ENCODE measurements at regions of chr21 and their contacts with region 1.

Region 1: GRCh38 chr21:15064576-15065391 is at the start of gene NRIP1:
- DNase-seq: peak; percentile 76 to 91 (median 86)
- ATAC-seq: peak; percentile 76 to 80
- H3K4me3 Mint-ChIP-seq: peak within 1 kb of the TSS; percentile 94 to 98 (median 97)
- H3K27ac Mint-ChIP-seq: peak within 1 kb of the TSS; percentile 96 to 99 (median 98)
- H3K4me1 Mint-ChIP-seq: peaks cover 28 to 56% (median 42%) of the 10 kb centered on the region in 4 donors
- H3K27me3 Mint-ChIP-seq: no peaks in the 10 kb centered on the region
- polyA plus RNA-seq, gene NRIP1: 26.6 to 38.8 (median 34.1) TPM

Region 2: GRCh38 chr21:14382835-14383594 is 681.8 kb before region 1 on chr21 and contains the start of gene HSPA13:
- POLR2A ChIA-PET with region 1: interaction called, 14 read pairs
- DNase-seq: peak; percentile 92 to 100 (median 99)
- ATAC-seq: peak; percentile 94 to 96
- H3K4me3 Mint-ChIP-seq: peak within 1 kb of the TSS; percentile 95 to 100 (median 100)
- H3K27ac Mint-ChIP-seq: peak within 1 kb of the TSS; percentile 96 to 100 (median 100)
- H3K4me1 Mint-ChIP-seq: peaks cover 11 to 46% (median 39%) of the 10 kb centered on the region in 4 donors
- H3K27me3 Mint-ChIP-seq: no peaks in the 10 kb centered on the region
- polyA plus RNA-seq, gene HSPA13: 10.2 to 11.4 (median 11.0) TPM

Region 3: DNA sequence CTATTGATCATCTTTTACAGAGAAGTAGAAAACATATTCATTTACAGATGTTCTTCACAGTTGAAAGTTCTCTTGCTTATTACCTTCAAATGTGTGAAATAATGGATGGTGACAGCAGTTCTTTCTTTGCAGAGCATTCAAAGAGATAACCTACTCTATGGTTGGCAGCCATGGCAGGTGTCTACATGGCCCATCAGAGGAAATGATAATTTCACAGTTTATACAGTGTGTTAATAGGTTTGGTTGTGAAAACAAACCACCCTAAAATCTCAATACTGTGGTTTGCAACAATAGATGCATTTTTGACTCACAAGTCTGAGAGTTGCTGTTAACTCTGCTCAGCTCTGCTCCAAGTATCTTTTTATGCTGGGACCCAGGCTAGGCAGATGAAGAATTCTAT is 277.5 kb before region 1 on chr21:
- POLR2A ChIA-PET with region 1: no interaction called
- DNase-seq: no peak
- ATAC-seq: no peak
- H3K4me3 Mint-ChIP-seq: no peak overlapping the region
- H3K27ac Mint-ChIP-seq: no peak overlapping the region
- H3K4me1 Mint-ChIP-seq: no peaks in the 10 kb centered on the region
- H3K27me3 Mint-ChIP-seq: no peaks in the 10 kb centered on the region

Region 4: GRCh38 chr21:15005391-15005790 is 59.4 kb before region 1 on chr21:
- POLR2A ChIA-PET with region 1: interaction called, 34 read pairs
- DNase-seq: peak; percentile 5 to 66 (median 24)
- ATAC-seq: peak; percentile 85 to 88
- H3K4me3 Mint-ChIP-seq: peak overlapping the region; percentile 65 to 88 (median 79)
- H3K27ac Mint-ChIP-seq: peak overlapping the region; percentile 59 to 97 (median 89)
- H3K4me1 Mint-ChIP-seq: peaks cover 32 to 60% (median 55%) of the 10 kb centered on the region in 4 donors
- H3K27me3 Mint-ChIP-seq: no peaks in the 10 kb centered on the region

Region 5: DNA sequence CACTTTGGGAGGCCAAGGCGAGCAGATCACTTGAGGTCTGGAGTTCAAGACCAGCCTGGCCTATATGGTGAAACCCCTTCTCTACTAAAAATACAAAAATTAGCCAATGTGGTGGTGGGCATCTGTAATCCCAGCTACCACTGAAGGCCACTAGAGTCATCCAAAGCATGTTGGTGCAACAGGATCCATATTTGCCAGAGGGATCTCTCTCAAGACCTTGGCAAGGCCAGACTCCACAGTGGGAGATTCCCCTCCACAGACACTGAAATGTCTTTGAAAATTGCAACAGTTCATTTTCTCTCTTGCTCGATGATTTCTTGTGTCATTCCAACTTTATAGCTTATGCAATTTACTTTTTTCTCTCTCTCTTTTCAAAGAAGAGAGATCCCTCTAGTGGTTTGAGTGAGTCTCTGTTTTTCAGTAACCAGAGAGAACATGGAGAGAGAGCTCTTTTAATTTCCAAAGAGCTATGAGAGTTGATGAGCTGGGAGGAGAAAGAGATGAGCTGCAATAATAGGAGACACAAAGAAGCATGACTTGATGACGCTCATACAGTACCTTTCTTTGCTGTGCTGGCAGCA is 488.2 kb after region 1 on chr21:
- POLR2A ChIA-PET with region 1: interaction called, 14 read pairs
- DNase-seq: peak in 3 of 10 donors; percentile 23 to 54 (median 51)
- ATAC-seq: peak; percentile 52 to 61
- H3K4me3 Mint-ChIP-seq: peak overlapping the region in 1 of 10 donors; percentile 8
- H3K27ac Mint-ChIP-seq: peak overlapping the region in 2 of 10 donors; percentile 1 to 5
- H3K4me1 Mint-ChIP-seq: peaks cover 0 to 14% (median 13%) of the 10 kb centered on the region in 4 donors
- H3K27me3 Mint-ChIP-seq: peaks cover 0 to 2% (median 0%) of the 10 kb centered on the region in 5 donors